B cell (primary cell): ENCODE measurements at regions of chr2 and their contacts with region 1.

Region 1: GRCh38 chr2:134118279-134119116 is 135.4 kb upstream of the MGAT5 start:
- DNase-seq: peak; percentile 88
- ATAC-seq: peak; percentile 25
- H3K4me3 ChIP-seq: peak overlapping the region; percentile 2 to 94 (median 83)
- H3K4me3 Mint-ChIP-seq: peak overlapping the region; percentile 94
- H3K27ac ChIP-seq: peak overlapping the region in 1 of 2 donors; percentile 24
- H3K27ac Mint-ChIP-seq: peak overlapping the region; percentile 97
- H3K4me1 ChIP-seq: peaks cover 33 to 38% of the 10 kb centered on the region in 2 donors
- H3K4me1 Mint-ChIP-seq: peaks cover 36% of the 10 kb centered on the region
- H3K27me3 ChIP-seq: no peaks in the 10 kb centered on the region
- H3K27me3 Mint-ChIP-seq: no peaks in the 10 kb centered on the region
- CTCF ChIP-seq: peak; percentile 80

Region 2: DNA sequence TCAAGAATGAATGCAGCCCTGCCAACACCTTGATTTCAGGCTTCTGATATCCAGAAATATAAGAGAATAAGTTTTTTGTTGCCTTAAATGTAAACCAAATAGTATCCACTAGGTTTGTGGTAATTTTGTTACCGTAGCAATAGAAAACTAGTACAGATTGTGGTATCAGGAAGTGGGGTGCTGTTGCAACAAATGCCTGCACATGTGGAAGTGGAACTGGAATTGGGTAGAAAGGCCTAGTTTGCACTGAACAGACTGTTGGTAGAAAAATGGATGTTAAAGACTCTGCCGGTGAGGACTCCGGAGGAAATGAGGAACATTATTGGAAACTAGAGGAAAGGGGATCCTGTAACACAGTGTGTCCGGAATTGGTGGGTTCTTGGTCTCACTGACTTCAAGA is 10.4 kb before region 1 on chr2:
- CTCF ChIA-PET with region 1: interaction called, 11 read pairs
- POLR2A ChIA-PET with region 1: interaction called, 10 read pairs
- intact Hi-C with region 1: no loop called
- DNase-seq: no peak
- ATAC-seq: no peak
- H3K4me3 ChIP-seq: no peak overlapping the region
- H3K4me3 Mint-ChIP-seq: no peak overlapping the region
- H3K27ac ChIP-seq: no peak overlapping the region
- H3K27ac Mint-ChIP-seq: no peak overlapping the region
- H3K4me1 ChIP-seq: no peaks in the 10 kb centered on the region
- H3K4me1 Mint-ChIP-seq: peaks cover 7% of the 10 kb centered on the region
- H3K27me3 ChIP-seq: no peaks in the 10 kb centered on the region
- H3K27me3 Mint-ChIP-seq: no peaks in the 10 kb centered on the region
- CTCF ChIP-seq: no peak

Region 3: GRCh38 chr2:134198006-134198634 is 79.6 kb after region 1 on chr2:
- CTCF ChIA-PET with region 1: interaction called, 18 read pairs
- POLR2A ChIA-PET with region 1: no interaction called
- intact Hi-C with region 1: no loop called
- DNase-seq: no peak
- ATAC-seq: no peak
- H3K4me3 ChIP-seq: no peak overlapping the region
- H3K4me3 Mint-ChIP-seq: peak overlapping the region; percentile 66
- H3K27ac ChIP-seq: peak overlapping the region; percentile 23 to 59
- H3K27ac Mint-ChIP-seq: peak overlapping the region; percentile 62
- H3K4me1 ChIP-seq: peaks cover 56 to 57% of the 10 kb centered on the region in 2 donors
- H3K4me1 Mint-ChIP-seq: peaks cover 82% of the 10 kb centered on the region
- H3K27me3 ChIP-seq: no peaks in the 10 kb centered on the region
- H3K27me3 Mint-ChIP-seq: no peaks in the 10 kb centered on the region
- CTCF ChIP-seq: no peak

Region 4: DNA sequence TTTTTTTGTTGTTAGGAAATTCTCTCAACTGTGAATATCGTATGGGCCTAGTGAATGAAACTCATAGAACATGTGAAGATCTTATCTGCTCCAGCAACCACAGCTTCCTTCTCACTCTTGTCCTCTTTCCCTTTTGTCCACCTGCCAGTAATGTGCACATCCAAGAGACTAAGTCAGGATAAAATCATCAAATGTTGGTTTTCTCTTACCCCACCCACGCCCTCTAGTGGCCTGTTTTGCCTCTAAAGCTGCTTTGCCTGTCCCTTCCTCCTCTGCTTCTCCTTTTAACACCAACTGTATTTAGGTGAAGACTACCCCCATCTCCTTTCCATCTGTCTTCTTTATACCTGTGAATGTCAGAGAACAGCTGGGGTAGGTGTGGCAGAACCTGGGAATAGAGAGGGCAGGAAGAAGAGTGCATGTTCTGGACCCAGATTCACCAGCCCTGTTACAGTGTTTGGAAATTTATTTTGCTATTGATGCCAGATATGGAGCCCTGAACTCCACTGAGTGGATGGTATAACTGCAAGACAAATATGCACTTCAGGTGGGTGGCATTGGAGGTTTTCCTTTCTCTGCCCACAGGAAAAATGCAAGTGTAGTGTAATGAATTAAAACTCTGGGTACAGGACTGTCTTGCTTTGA is 127.0 kb after region 1 on chr2:
- CTCF ChIA-PET with region 1: interaction called, 197 read pairs
- POLR2A ChIA-PET with region 1: interaction called, 5 read pairs
- intact Hi-C with region 1: loop called (anchors 1 kb)
- DNase-seq: peak; percentile 84
- ATAC-seq: peak; percentile 55
- H3K4me3 ChIP-seq: peak overlapping the region in 2 of 5 experiments; percentile 6 to 12
- H3K4me3 Mint-ChIP-seq: peak overlapping the region; percentile 76
- H3K27ac ChIP-seq: peak overlapping the region; percentile 50 to 83
- H3K27ac Mint-ChIP-seq: peak overlapping the region; percentile 85
- H3K4me1 ChIP-seq: peaks cover 87 to 92% of the 10 kb centered on the region in 2 donors
- H3K4me1 Mint-ChIP-seq: peaks cover 92% of the 10 kb centered on the region
- H3K27me3 ChIP-seq: no peaks in the 10 kb centered on the region
- H3K27me3 Mint-ChIP-seq: no peaks in the 10 kb centered on the region
- CTCF ChIP-seq: peak; percentile 80

Region 5: GRCh38 chr2:134348239-134348638 is 229.7 kb after region 1 on chr2:
- CTCF ChIA-PET with region 1: interaction called, 4 read pairs
- POLR2A ChIA-PET with region 1: no interaction called
- intact Hi-C with region 1: loop called (anchors 5 kb)
- DNase-seq: no peak
- ATAC-seq: no peak
- H3K4me3 ChIP-seq: no peak overlapping the region
- H3K4me3 Mint-ChIP-seq: no peak overlapping the region
- H3K27ac ChIP-seq: peak overlapping the region in 1 of 2 donors; percentile 15
- H3K27ac Mint-ChIP-seq: peak overlapping the region; percentile 66
- H3K4me1 ChIP-seq: peaks cover 6 to 8% of the 10 kb centered on the region in 2 donors
- H3K4me1 Mint-ChIP-seq: peaks cover 35% of the 10 kb centered on the region
- H3K27me3 ChIP-seq: no peaks in the 10 kb centered on the region
- H3K27me3 Mint-ChIP-seq: no peaks in the 10 kb centered on the region
- CTCF ChIP-seq: no peak

Region 6: GRCh38 chr2:134453973-134454372 is 335.5 kb after region 1 on chr2:
- CTCF ChIA-PET with region 1: interaction called, 35 read pairs
- POLR2A ChIA-PET with region 1: no interaction called
- intact Hi-C with region 1: loop called (anchors 1 kb)
- DNase-seq: no peak
- ATAC-seq: no peak
- H3K4me3 ChIP-seq: no peak overlapping the region
- H3K4me3 Mint-ChIP-seq: no peak overlapping the region
- H3K27ac ChIP-seq: no peak overlapping the region
- H3K27ac Mint-ChIP-seq: no peak overlapping the region
- H3K4me1 ChIP-seq: no peaks in the 10 kb centered on the region
- H3K4me1 Mint-ChIP-seq: no peaks in the 10 kb centered on the region
- H3K27me3 ChIP-seq: no peaks in the 10 kb centered on the region
- H3K27me3 Mint-ChIP-seq: no peaks in the 10 kb centered on the region
- CTCF ChIP-seq: no peak

Region 7: GRCh38 chr2:134758633-134759032 is 640.1 kb after region 1 on chr2:
- CTCF ChIA-PET with region 1: no interaction called
- POLR2A ChIA-PET with region 1: no interaction called
- intact Hi-C with region 1: no loop called
- DNase-seq: peak; percentile 84
- ATAC-seq: peak; percentile 96
- H3K4me3 ChIP-seq: peak overlapping the region in 1 of 5 experiments; percentile 10
- H3K4me3 Mint-ChIP-seq: peak overlapping the region; percentile 59
- H3K27ac ChIP-seq: no peak overlapping the region
- H3K27ac Mint-ChIP-seq: peak overlapping the region; percentile 73
- H3K4me1 ChIP-seq: peaks cover 18 to 22% of the 10 kb centered on the region in 2 donors
- H3K4me1 Mint-ChIP-seq: peaks cover 26% of the 10 kb centered on the region
- H3K27me3 ChIP-seq: no peaks in the 10 kb centered on the region
- H3K27me3 Mint-ChIP-seq: peaks cover 3% of the 10 kb centered on the region
- CTCF ChIP-seq: no peak

Region 8: DNA sequence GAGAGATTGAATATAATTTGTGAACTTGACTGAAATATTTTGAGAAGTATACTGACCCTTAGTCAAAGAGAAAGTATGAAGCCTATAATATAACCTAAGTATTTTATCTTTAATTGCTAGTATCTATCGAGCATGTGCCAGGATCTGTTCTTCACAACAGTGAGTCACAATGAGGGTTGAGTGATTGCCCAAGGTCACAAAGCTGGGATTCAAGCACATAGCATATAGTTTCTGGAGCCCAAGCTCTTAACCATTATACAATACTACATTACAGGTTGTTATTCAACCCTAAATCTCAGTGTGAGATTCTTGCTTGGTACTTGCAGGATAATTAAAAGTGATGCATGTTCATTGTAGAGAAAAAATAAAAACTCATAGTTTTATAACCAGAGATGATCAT is 1030.8 kb after region 1 on chr2:
- CTCF ChIA-PET with region 1: no interaction called
- POLR2A ChIA-PET with region 1: no interaction called
- intact Hi-C with region 1: no loop called
- DNase-seq: no peak
- ATAC-seq: no peak
- H3K4me3 ChIP-seq: no peak overlapping the region
- H3K4me3 Mint-ChIP-seq: no peak overlapping the region
- H3K27ac ChIP-seq: no peak overlapping the region
- H3K27ac Mint-ChIP-seq: no peak overlapping the region
- H3K4me1 ChIP-seq: no peaks in the 10 kb centered on the region
- H3K4me1 Mint-ChIP-seq: no peaks in the 10 kb centered on the region
- H3K27me3 ChIP-seq: no peaks in the 10 kb centered on the region
- H3K27me3 Mint-ChIP-seq: no peaks in the 10 kb centered on the region
- CTCF ChIP-seq: no peak